WTC11 (cell line): ENCODE measurements at regions of chr10 and their contacts with region 1.

Region 1: DNA sequence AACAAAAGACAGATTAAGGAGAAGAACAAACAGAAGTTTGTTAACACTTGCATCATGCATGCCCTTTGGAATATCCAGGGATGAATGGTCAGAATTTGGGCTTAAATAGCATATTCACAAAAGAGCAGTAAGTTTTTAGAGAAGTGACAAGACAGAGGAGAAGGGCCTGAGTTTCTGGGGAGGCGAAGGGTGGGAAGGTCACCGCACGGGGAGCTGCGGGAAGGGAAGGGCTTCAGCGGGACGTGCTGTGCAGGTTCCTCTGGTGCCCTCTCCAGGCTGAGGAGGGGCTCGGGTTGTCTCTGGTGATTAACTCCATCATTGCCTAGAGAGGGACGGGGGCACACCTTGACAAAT is 10.4 kb upstream of the ZNF22 start:
- DNase-seq: peak; percentile 62
- ATAC-seq: peak; percentile 88
- H3K4me3 Mint-ChIP-seq: no peak overlapping the region
- H3K27ac Mint-ChIP-seq: peak overlapping the region; percentile 82
- H3K4me1 Mint-ChIP-seq: peaks cover 75% of the 10 kb centered on the region
- H3K27me3 Mint-ChIP-seq: no peaks in the 10 kb centered on the region; the same call in 1 of the 2 replicates
- CTCF ChIP-seq: no peak

Region 2: GRCh38 chr10:44959247-44960087 is 30.8 kb before region 1 on chr10 and contains the start of gene RASSF4:
- CTCF ChIA-PET with region 1: interaction called, 11 read pairs
- POLR2A ChIA-PET with region 1: no interaction called
- DNase-seq: peak; percentile 94
- ATAC-seq: peak; percentile 97
- H3K4me3 Mint-ChIP-seq: peak within 1 kb of the TSS; percentile 81
- H3K27ac Mint-ChIP-seq: no peak within 1 kb of the TSS; the same call in 1 of the 2 replicates
- H3K4me1 Mint-ChIP-seq: peaks cover 56% of the 10 kb centered on the region
- H3K27me3 Mint-ChIP-seq: peaks cover 10% of the 10 kb centered on the region
- CTCF ChIP-seq: no peak
- total RNA-seq, gene RASSF4: 15.7 to 16.7 TPM (median 16.2 TPM) in 3 replicates

Region 3: DNA sequence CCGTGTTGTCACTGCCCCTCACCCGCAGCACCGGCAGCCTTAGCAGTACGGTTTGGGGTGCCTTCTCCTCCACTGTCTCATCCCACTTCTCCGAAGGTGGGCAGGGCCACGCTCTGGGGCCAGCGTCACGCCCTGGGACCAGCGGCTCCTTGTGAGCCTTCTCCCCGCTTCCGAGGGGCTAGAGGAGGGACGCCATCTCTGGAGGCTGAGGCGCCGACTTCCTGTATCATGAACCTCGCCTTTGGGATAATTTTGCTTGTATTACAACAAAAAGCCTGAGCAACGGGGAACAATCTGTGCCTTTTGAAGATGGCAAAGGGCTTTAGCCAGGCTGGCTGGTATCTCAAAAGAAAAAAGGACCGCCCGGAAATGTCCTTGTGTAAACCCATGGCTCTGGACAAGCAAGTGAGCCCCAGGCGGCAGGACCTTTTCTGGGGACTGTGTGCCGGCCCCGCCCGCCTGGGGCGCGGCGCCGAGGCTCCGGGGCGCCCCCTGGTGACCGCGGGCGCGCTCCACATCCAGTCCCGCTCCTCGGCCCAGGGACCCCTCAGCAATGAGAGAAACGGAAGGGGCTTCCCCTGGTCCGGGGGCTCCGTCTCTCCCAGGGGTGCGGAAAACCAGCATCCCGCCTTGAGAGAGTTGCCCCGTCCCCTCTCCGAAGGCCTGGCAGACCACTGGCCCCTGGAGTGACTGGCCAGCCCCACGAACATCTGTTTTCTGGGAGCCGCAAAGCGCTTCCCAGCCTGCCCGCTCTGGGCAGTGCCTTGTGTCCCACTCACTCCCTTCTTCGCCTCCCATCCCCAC is 15.4 kb before region 1 on chr10:
- CTCF ChIA-PET with region 1: interaction called, 46 read pairs
- POLR2A ChIA-PET with region 1: no interaction called
- DNase-seq: peak; percentile 57
- ATAC-seq: peak; percentile 66
- H3K4me3 Mint-ChIP-seq: peak overlapping the region; percentile 61
- H3K27ac Mint-ChIP-seq: no peak overlapping the region
- H3K4me1 Mint-ChIP-seq: peaks cover 57% of the 10 kb centered on the region
- H3K27me3 Mint-ChIP-seq: peaks cover 12% of the 10 kb centered on the region
- CTCF ChIP-seq: peak; percentile 87

Region 4: GRCh38 chr10:45000752-45001380 is 10.6 kb after region 1 on chr10 and contains the start of gene ZNF22:
- CTCF ChIA-PET with region 1: interaction called, 11 read pairs
- POLR2A ChIA-PET with region 1: no interaction called
- DNase-seq: peak; percentile 70
- ATAC-seq: peak; percentile 86
- H3K4me3 Mint-ChIP-seq: peak within 1 kb of the TSS; percentile 79
- H3K27ac Mint-ChIP-seq: peak within 1 kb of the TSS; percentile 70
- H3K4me1 Mint-ChIP-seq: peaks cover 38% of the 10 kb centered on the region
- H3K27me3 Mint-ChIP-seq: peaks cover 14% of the 10 kb centered on the region
- CTCF ChIP-seq: no peak
- total RNA-seq, gene ZNF22: 31.0 to 36.8 TPM (median 35.9 TPM) in 3 replicates

Region 5: DNA sequence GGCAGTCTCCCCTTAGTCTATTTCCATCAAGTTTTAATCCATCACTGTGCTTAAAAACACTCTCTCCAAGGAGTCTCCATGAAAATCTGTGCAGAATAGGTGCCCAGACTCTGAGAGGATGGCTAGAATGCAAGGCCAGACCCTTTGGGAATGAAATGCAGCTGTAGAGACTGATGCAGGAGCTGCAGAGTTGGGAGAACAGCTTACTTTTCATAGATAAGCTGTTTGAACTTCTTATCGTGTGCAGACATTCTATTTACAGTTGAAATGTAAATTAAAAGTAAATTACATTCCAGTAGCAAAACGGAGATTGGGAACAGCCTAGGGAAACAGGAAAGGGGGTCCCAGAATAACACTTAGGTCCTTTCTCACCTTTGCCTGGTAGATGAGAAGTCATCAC is 25.3 kb after region 1 on chr10:
- CTCF ChIA-PET with region 1: no interaction called
- POLR2A ChIA-PET with region 1: no interaction called
- DNase-seq: no peak
- ATAC-seq: no peak
- H3K4me3 Mint-ChIP-seq: no peak overlapping the region
- H3K27ac Mint-ChIP-seq: no peak overlapping the region
- H3K4me1 Mint-ChIP-seq: no peaks in the 10 kb centered on the region
- H3K27me3 Mint-ChIP-seq: no peaks in the 10 kb centered on the region
- CTCF ChIP-seq: no peak